ENCODE measurements at regions of chr14 and their contacts with region 1.

Region 1: DNA sequence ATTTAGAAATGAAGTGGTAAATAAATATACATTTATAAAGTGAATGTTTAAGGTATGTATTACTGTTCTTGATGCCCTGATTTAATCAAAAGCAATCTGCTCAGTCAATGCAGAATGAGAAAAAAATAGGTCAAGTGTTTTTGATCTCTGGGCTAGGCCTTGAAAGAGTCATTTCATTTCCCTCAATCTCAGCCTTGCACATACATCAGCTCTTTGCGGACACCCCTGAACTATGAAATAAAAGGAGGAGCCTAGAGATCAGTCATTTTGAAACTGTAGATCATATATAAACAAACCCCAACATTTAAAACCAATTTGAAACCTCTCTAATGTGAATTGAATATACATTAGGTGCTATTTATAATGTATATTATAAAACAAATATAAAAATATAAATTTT is 42.5 kb downstream of the ATG2B start:
- DNase-seq: no peak
- H3K4me3 ChIP-seq: no peak overlapping the region
- H3K27ac ChIP-seq: no peak overlapping the region
- H3K4me1 ChIP-seq: no peaks in the 10 kb centered on the region
- H3K27me3 ChIP-seq: no peaks in the 10 kb centered on the region
- CTCF ChIP-seq: no peak
- POLR2A ChIP-seq: no peak

Region 2: DNA sequence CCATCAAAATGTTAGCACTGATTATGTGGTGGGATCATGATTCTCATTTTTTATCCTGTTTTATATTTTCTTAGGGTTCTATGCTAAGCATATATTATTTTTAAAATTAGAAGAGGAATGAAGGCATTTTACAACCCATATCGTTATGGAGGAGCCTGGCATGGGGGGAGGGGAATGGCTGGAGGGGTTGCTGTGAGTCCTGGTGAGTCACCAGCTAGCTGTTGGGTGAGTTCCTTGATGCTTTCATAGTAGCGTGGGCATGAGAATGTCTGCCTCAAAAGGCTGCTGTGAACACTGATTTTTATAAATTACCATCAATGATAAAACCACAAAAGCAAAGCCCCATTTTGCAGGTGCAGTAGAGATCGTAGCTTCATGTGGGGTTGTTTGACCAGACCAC is 234.6 kb before region 1 on chr14:
- intact Hi-C with region 1: no loop called
- DNase-seq: no peak
- H3K4me3 ChIP-seq: no peak overlapping the region
- H3K27ac ChIP-seq: no peak overlapping the region
- H3K4me1 ChIP-seq: peaks cover 21% of the 10 kb centered on the region
- H3K27me3 ChIP-seq: no peaks in the 10 kb centered on the region
- CTCF ChIP-seq: no peak
- POLR2A ChIP-seq: no peak

Region 3: DNA sequence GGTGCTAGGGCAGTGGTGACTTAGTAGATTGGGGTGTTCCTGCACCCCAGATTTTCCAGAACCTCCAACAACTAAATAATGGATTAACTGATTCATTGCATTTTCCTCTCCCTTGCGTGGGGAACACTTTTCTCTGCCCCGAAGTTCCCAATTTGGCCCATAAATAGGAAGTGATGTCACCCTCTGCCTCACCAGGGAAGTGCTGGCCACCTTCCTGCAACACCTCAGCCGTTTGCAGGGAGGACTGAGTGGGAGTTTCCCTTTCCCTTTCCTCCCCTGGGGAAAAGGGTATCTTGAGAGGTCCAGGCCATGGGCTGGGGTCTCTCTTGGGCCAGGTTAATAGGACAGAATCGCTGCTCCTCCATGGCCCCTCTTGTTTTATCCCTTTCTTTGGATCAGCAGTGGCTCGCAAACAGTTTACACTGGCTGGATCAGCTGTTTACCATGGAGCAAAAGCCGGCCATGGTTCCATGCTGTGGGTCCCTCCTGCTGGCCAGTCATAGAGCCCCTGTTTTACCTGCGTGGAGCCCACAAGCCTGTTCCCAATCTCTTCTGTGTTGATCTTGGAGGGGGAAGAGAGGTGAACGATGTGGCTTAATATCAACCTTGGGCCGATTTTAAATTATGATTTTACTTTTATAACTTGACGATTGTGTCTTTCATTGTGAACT is 385.0 kb after region 1 on chr14:
- intact Hi-C with region 1: loop called (anchors 5 kb)
- DNase-seq: no peak
- H3K4me3 ChIP-seq: no peak overlapping the region
- H3K27ac ChIP-seq: no peak overlapping the region
- H3K4me1 ChIP-seq: no peaks in the 10 kb centered on the region
- H3K27me3 ChIP-seq: no peaks in the 10 kb centered on the region
- CTCF ChIP-seq: no peak
- POLR2A ChIP-seq: no peak

Measured in vagina (tissue), 2 donors.